Naive thymus-derived CD4-positive, alpha-beta T cell (primary cell): ENCODE measurements at regions of chr18 and their contacts with region 1.

Region 1: GRCh38 chr18:58781627-58782194 is 83.0 kb upstream of the ZNF532 start:
- DNase-seq: peak; percentile 28 to 73 (median 59)
- ATAC-seq: peak; percentile 83
- H3K4me3 ChIP-seq: no peak overlapping the region
- H3K4me3 Mint-ChIP-seq: no peak overlapping the region
- H3K27ac ChIP-seq: no peak overlapping the region
- H3K27ac Mint-ChIP-seq: no peak overlapping the region
- H3K4me1 ChIP-seq: no peaks in the 10 kb centered on the region
- H3K4me1 Mint-ChIP-seq: peaks cover 0 to 2% (median 0%) of the 10 kb centered on the region in 7 donors
- H3K27me3 ChIP-seq: no peaks in the 10 kb centered on the region
- H3K27me3 Mint-ChIP-seq: peaks cover 7 to 34% (median 23%) of the 10 kb centered on the region in 5 donors

Region 2: DNA sequence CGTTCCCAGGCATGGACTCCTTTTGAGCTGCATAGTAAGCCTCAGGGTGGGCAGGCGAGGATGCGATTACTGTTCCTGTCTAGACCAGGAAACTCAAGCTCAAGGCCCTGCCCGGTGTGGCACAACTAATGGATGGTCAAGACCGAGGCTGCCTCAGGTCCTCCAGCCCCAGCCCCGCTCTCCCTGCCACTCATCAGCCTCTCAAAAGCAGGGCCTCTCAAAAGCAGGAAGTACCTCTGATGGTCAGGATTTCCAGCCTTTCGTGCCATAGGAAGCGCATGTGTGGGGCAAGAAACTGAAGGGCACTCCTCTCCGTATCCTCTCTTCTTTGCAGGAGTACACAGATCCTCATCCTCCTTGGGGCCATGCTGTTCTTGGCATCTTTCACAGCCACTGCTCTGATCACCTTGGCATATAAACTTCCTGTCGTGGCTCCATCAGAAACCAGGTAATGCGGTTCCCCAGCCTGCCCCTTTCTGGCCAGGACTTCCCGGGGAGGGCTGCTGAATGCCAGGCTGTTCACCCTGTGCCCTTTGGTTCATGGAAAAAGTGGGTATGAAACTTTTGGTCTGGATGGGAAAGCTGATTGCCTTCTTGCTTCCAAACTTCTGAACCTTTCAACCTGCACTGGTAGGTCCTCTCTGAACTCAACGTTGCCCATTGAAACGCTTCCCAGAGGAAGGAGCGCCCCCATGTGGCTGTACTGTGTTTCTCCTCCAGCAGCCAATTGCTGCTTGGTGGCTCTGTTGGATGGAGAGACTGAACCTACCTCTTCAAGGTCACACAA is 275.2 kb after region 1 on chr18:
- CTCF ChIA-PET with region 1: no interaction called
- POLR2A ChIA-PET with region 1: no interaction called
- intact Hi-C with region 1: loop called in 1 of 2 experiments (anchors 1 kb)
- DNase-seq: peak in 8 of 9 donors; percentile 7 to 52 (median 42)
- ATAC-seq: peak; percentile 70
- H3K4me3 ChIP-seq: no peak overlapping the region
- H3K4me3 Mint-ChIP-seq: no peak overlapping the region
- H3K27ac ChIP-seq: no peak overlapping the region
- H3K27ac Mint-ChIP-seq: no peak overlapping the region
- H3K4me1 ChIP-seq: no peaks in the 10 kb centered on the region
- H3K4me1 Mint-ChIP-seq: peaks cover 0 to 1% (median 0%) of the 10 kb centered on the region in 7 donors
- H3K27me3 ChIP-seq: no peaks in the 10 kb centered on the region
- H3K27me3 Mint-ChIP-seq: peaks cover 6 to 30% (median 17%) of the 10 kb centered on the region in 5 donors

Region 3: GRCh38 chr18:59070181-59070912 is 288.6 kb after region 1 on chr18:
- CTCF ChIA-PET with region 1: interaction called, 42 read pairs
- POLR2A ChIA-PET with region 1: no interaction called
- intact Hi-C with region 1: loop called (anchors 1 kb)
- DNase-seq: peak; percentile 35 to 75 (median 65)
- ATAC-seq: peak; percentile 85
- H3K4me3 ChIP-seq: no peak overlapping the region
- H3K4me3 Mint-ChIP-seq: no peak overlapping the region
- H3K27ac ChIP-seq: no peak overlapping the region
- H3K27ac Mint-ChIP-seq: no peak overlapping the region
- H3K4me1 ChIP-seq: no peaks in the 10 kb centered on the region
- H3K4me1 Mint-ChIP-seq: no peaks in the 10 kb centered on the region
- H3K27me3 ChIP-seq: no peaks in the 10 kb centered on the region
- H3K27me3 Mint-ChIP-seq: peaks cover 0 to 8% (median 5%) of the 10 kb centered on the region in 5 donors

Region 4: DNA sequence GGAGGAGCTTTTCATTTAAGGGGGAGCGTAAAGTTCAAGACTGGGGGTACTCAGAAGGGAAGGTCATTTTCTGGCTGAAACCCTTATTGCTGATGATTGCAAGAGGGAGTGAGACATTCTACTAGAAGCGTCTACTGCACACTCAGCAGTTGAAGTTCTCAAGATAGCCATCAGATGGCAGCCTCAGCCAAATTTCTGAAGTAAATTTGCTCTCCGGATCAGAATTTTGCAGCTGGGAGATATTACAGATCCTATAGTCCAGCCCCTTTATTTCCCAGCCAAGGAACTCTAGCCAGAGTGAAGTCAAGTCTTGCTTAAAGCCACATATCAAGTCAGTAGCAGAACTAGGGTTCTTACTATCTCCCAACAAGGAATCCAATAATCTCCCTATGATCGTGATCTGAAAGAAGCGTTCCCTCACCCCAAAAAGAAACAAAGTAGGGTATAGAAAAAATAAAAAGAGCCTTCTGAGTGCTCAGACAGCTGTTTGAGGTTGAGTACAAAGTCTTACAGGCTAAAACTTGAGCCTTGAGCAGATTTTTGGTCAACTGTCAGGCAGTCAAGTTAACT is 467.6 kb after region 1 on chr18:
- CTCF ChIA-PET with region 1: no interaction called
- POLR2A ChIA-PET with region 1: no interaction called
- intact Hi-C with region 1: no loop called
- DNase-seq: peak in 3 of 9 donors; percentile 9 to 17 (median 16)
- ATAC-seq: no peak
- H3K4me3 ChIP-seq: no peak overlapping the region
- H3K4me3 Mint-ChIP-seq: no peak overlapping the region
- H3K27ac ChIP-seq: no peak overlapping the region
- H3K27ac Mint-ChIP-seq: no peak overlapping the region
- H3K4me1 ChIP-seq: no peaks in the 10 kb centered on the region
- H3K4me1 Mint-ChIP-seq: peaks cover 0 to 2% (median 0%) of the 10 kb centered on the region in 7 donors
- H3K27me3 ChIP-seq: no peaks in the 10 kb centered on the region
- H3K27me3 Mint-ChIP-seq: peaks cover 49 to 67% (median 63%) of the 10 kb centered on the region in 5 donors

Region 5: GRCh38 chr18:59833785-59834184 is 1052.1 kb after region 1 on chr18:
- CTCF ChIA-PET with region 1: no interaction called
- POLR2A ChIA-PET with region 1: no interaction called
- intact Hi-C with region 1: no loop called
- DNase-seq: no peak
- ATAC-seq: no peak
- H3K4me3 ChIP-seq: no peak overlapping the region
- H3K4me3 Mint-ChIP-seq: no peak overlapping the region
- H3K27ac ChIP-seq: no peak overlapping the region
- H3K27ac Mint-ChIP-seq: no peak overlapping the region
- H3K4me1 ChIP-seq: no peaks in the 10 kb centered on the region
- H3K4me1 Mint-ChIP-seq: peaks cover 0 to 7% (median 0%) of the 10 kb centered on the region in 7 donors
- H3K27me3 ChIP-seq: no peaks in the 10 kb centered on the region
- H3K27me3 Mint-ChIP-seq: peaks cover 0 to 45% (median 0%) of the 10 kb centered on the region in 5 donors